ENCODE measurements at regions of chr12 and their contacts with region 1.

Region 1: DNA sequence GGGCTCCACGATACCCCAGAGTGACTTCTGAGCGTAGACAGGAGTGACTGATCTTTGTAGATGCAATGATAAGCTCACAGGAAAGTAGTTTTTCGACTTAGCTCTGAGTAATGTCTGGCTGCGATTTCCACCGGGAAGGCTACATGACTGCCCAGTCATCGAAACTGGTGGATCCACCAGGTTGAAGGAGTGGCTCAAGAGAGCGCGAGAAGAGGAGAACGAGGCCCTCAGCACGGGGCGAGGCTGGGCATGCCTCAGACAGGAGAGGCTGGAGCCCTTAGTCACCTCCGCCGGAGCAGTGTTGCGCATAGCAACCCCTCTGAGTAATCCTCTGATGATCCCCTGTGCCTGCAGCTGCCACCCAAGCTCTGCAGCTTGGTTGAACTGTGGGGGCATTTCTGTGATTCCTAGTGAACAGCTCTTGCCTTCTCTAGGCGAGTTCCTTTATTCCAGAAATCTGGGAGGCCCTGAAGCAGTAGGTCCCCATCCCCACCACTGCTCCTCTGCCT is 25.6 kb downstream of the ELK3 start:
- DNase-seq: no peak
- ATAC-seq: peak in 2 of 4 donors; percentile 26 to 37
- H3K4me3 ChIP-seq: no peak overlapping the region
- H3K27ac ChIP-seq: peak overlapping the region in 6 of 12 donors; percentile 18 to 47 (median 34)
- H3K4me1 ChIP-seq: peaks cover 0 to 87% (median 54%) of the 10 kb centered on the region in 12 donors
- H3K27me3 ChIP-seq: no peaks in the 10 kb centered on the region
- CTCF ChIP-seq: no peak
- POLR2A ChIP-seq: no peak

Region 2: DNA sequence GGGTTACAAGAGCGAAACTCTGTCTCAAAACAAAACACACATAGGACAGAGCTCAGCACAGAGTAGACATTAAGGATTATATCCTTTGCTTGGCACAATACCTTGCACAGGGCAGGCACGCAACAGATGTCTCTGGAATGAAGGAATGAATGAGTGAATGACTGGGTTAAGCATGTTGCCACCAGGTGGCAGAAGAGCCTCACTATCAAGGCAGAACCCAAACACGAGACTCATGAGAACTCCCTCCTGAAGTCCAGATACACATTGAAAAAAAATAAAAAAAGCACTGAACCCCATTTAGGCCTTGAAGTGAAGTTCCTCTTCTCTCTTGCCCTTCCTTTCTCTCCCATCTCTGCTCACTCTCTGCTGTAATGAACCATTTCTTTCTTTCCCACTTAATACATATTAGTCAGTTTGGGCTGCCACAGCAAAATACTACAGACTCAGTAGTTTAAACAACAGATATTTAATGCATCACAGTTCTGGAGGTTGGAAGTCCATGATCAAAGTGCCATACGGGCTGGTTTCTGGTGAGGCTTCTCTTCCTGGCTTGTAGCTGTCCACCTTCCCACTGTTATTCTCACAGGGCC is 157.8 kb before region 1 on chr12:
- intact Hi-C with region 1: loop called (anchors 1 to 5 kb)
- DNase-seq: peak; percentile 61 to 74 (median 71)
- ATAC-seq: peak; percentile 55 to 92 (median 86)
- H3K4me3 ChIP-seq: no peak overlapping the region
- H3K27ac ChIP-seq: peak overlapping the region in 2 of 12 donors; percentile 7 to 39
- H3K4me1 ChIP-seq: peaks cover 0 to 27% (median 3%) of the 10 kb centered on the region in 12 donors
- H3K27me3 ChIP-seq: no peaks in the 10 kb centered on the region
- CTCF ChIP-seq: peak; percentile 73 to 93 (median 82)
- POLR2A ChIP-seq: no peak

Region 3: GRCh38 chr12:96194971-96195844 is 24.5 kb before region 1 on chr12:
- intact Hi-C with region 1: no loop called
- DNase-seq: peak; percentile 32 to 67 (median 46)
- ATAC-seq: peak in 2 of 4 donors; percentile 52 to 56
- H3K4me3 ChIP-seq: peak overlapping the region; percentile 58 to 98 (median 78)
- H3K27ac ChIP-seq: peak overlapping the region; percentile 74 to 95 (median 88)
- H3K4me1 ChIP-seq: peaks cover 3 to 58% (median 15%) of the 10 kb centered on the region in 12 donors
- H3K27me3 ChIP-seq: no peaks in the 10 kb centered on the region
- CTCF ChIP-seq: no peak
- POLR2A ChIP-seq: no peak

Region 4: DNA sequence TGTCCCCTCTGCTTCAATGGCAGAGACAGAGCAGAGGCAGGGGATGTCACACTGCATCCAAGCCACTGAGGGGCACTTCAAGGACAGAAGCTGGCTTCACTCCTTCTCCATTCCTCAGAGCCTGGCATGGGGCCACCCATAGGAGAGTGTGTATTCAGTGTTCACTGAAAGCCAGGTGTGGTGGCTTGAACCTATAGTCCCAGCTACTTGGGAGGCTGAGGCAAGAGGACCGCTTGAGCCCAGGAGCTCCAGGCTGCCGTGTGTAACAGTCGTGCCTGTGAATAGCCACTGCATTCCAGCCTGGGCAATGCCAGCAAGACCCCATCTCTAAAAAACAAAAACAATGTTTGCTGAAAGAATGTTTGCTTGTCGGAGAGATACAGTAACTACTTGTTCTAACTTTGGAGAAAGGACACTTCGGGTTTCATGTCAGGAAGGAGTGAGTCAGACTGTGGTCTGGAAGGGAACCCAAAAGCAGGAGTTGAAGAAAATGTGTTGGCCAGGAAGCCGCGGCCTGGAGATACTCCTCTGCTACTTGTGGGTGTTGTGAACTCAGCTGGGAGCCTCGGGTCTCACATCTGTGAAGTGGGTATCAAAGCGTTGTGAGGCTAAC is 17.8 kb after region 1 on chr12:
- intact Hi-C with region 1: loop called in 1 of 10 experiments (anchors 2 kb)
- DNase-seq: peak in 4 of 5 donors; percentile 58 to 82 (median 65)
- ATAC-seq: peak in 3 of 4 donors; percentile 6 to 21 (median 20)
- H3K4me3 ChIP-seq: peak overlapping the region in 1 of 12 donors; percentile 6
- H3K27ac ChIP-seq: peak overlapping the region; percentile 33 to 90 (median 78)
- H3K4me1 ChIP-seq: peaks cover 21 to 100% (median 96%) of the 10 kb centered on the region in 12 donors
- H3K27me3 ChIP-seq: no peaks in the 10 kb centered on the region
- CTCF ChIP-seq: no peak
- POLR2A ChIP-seq: no peak

Measured in heart left ventricle (tissue), 16 donors.